A549 (cell line): ENCODE measurements at regions of chr11 and their contacts with region 1.

Region 1: GRCh38 chr11:19903620-19904069 is 191.0 kb downstream of the NAV2 start:
- DNase-seq: peak; percentile 52 to 75
- ATAC-seq: peak; percentile 80 to 93; a peak in 5 of 6 replicates
- H3K4me3 ChIP-seq: no peak overlapping the region
- H3K27ac ChIP-seq: no peak overlapping the region
- H3K4me1 ChIP-seq: no peaks in the 10 kb centered on the region
- CTCF ChIP-seq: peak; percentile 92
- EP300 ChIP-seq: no peak
- POLR2A ChIP-seq: no peak
- RAD21 ChIP-seq: peak; percentile 92 to 95

Region 2: GRCh38 chr11:19553683-19554333 is 349.8 kb before region 1 on chr11:
- CTCF ChIA-PET with region 1: interaction called, 191 read pairs
- POLR2A ChIA-PET with region 1: no interaction called
- DNase-seq: peak; percentile 57 to 67
- ATAC-seq: peak; percentile 70 to 90
- H3K4me3 ChIP-seq: no peak overlapping the region
- H3K27ac ChIP-seq: no peak overlapping the region
- H3K4me1 ChIP-seq: no peaks in the 10 kb centered on the region
- CTCF ChIP-seq: peak; percentile 92
- EP300 ChIP-seq: no peak
- POLR2A ChIP-seq: no peak
- RAD21 ChIP-seq: peak; percentile 98

Region 3: GRCh38 chr11:19742588-19743292 is 160.9 kb before region 1 on chr11:
- CTCF ChIA-PET with region 1: interaction called, 41 read pairs
- POLR2A ChIA-PET with region 1: no interaction called
- DNase-seq: peak; percentile 45 to 80
- ATAC-seq: peak; percentile 84 to 97
- H3K4me3 ChIP-seq: no peak overlapping the region
- H3K27ac ChIP-seq: 0 out of 6 replicates have a peak overlapping the region, but pooled peaks of 1 of the 2 experiments have one; percentile 15
- H3K4me1 ChIP-seq: 0 out of 3 replicates have a peak, but pooled peaks cover 8% of the 10 kb centered on the region
- CTCF ChIP-seq: peak; percentile 87
- EP300 ChIP-seq: no peak
- POLR2A ChIP-seq: no peak
- RAD21 ChIP-seq: peak; percentile 96

Region 4: GRCh38 chr11:19919050-19919561 is 15.5 kb after region 1 on chr11:
- CTCF ChIA-PET with region 1: interaction called, 30 read pairs
- POLR2A ChIA-PET with region 1: interaction called, 3 read pairs
- DNase-seq: peak; percentile 32 to 82
- ATAC-seq: peak; percentile 97 to 98
- H3K4me3 ChIP-seq: no peak overlapping the region
- H3K27ac ChIP-seq: peak overlapping the region; percentile 42 to 71; a peak in 5 of 6 replicates
- H3K4me1 ChIP-seq: peaks cover 33% of the 10 kb centered on the region
- CTCF ChIP-seq: no peak
- EP300 ChIP-seq: no peak
- POLR2A ChIP-seq: no peak
- RAD21 ChIP-seq: no peak

Region 5: DNA sequence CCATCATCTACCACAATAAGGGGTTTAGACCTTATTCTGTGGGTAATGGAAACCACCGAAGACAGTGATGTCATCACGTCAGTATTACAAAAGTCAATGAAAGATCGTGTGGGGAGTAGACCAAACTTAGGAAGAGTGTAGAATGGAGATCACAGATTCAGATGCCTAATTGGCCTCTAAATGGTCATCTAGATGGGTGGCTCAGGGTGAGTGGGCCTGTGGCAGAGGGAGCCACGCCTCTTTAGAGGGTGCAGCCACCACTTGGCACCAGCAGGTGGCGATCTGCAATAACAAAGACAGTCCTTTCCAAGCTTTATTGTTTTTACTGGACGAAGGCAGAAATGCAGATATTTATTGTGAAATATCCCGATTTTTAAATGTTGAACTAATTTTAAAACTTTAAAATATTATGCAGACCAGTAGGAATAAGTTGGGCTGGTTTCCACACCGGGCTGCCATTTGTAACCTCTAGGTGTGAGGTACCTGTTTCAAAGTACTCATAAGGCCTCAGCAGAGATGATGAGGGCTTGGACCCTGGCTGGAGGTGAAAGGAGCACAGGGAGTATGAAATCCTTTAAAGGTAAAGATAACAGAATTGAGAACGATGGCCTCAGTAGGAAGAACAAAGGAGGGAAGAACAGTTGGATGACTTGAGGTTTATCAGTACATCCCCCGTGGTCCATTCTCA is 34.7 kb after region 1 on chr11:
- CTCF ChIA-PET with region 1: interaction called, 25 read pairs
- POLR2A ChIA-PET with region 1: no interaction called
- DNase-seq: peak; percentile 63 to 69
- ATAC-seq: peak; percentile 67 to 93; a peak in 5 of 6 replicates
- H3K4me3 ChIP-seq: no peak overlapping the region
- H3K27ac ChIP-seq: peak overlapping the region in 1 of 2 experiments; percentile 35; a peak in 1 of 6 replicates
- H3K4me1 ChIP-seq: peaks cover 12% of the 10 kb centered on the region; the same call in 2 of the 3 replicates
- CTCF ChIP-seq: peak; percentile 90
- EP300 ChIP-seq: no peak
- POLR2A ChIP-seq: no peak
- RAD21 ChIP-seq: peak; percentile 83 to 86

Region 6: GRCh38 chr11:20110908-20111669 is 207.4 kb after region 1 on chr11:
- CTCF ChIA-PET with region 1: interaction called, 13 read pairs
- POLR2A ChIA-PET with region 1: no interaction called
- DNase-seq: peak; percentile 70 to 85
- ATAC-seq: peak; percentile 56 to 78
- H3K4me3 ChIP-seq: no peak overlapping the region
- H3K27ac ChIP-seq: peak overlapping the region; percentile 98
- H3K4me1 ChIP-seq: peaks cover 42% of the 10 kb centered on the region
- CTCF ChIP-seq: peak; percentile 83
- EP300 ChIP-seq: no peak; a peak in 1 of 5 replicates
- POLR2A ChIP-seq: no peak
- RAD21 ChIP-seq: peak; percentile 73 to 81

Region 7: GRCh38 chr11:20355221-20356219 is 451.9 kb after region 1 on chr11:
- CTCF ChIA-PET with region 1: interaction called, 56 read pairs
- POLR2A ChIA-PET with region 1: no interaction called
- DNase-seq: peak; percentile 52 to 63
- ATAC-seq: peak; percentile 92 to 94
- H3K4me3 ChIP-seq: no peak overlapping the region
- H3K27ac ChIP-seq: no peak overlapping the region
- H3K4me1 ChIP-seq: peaks cover 13% of the 10 kb centered on the region
- CTCF ChIP-seq: peak; percentile 57
- EP300 ChIP-seq: no peak
- POLR2A ChIP-seq: no peak
- RAD21 ChIP-seq: peak; percentile 27 to 35; a peak in 3 of 5 replicates